Ascending aorta (tissue), 2 donors: ENCODE measurements at regions of chr3 and their contacts with region 1.

Region 1: DNA sequence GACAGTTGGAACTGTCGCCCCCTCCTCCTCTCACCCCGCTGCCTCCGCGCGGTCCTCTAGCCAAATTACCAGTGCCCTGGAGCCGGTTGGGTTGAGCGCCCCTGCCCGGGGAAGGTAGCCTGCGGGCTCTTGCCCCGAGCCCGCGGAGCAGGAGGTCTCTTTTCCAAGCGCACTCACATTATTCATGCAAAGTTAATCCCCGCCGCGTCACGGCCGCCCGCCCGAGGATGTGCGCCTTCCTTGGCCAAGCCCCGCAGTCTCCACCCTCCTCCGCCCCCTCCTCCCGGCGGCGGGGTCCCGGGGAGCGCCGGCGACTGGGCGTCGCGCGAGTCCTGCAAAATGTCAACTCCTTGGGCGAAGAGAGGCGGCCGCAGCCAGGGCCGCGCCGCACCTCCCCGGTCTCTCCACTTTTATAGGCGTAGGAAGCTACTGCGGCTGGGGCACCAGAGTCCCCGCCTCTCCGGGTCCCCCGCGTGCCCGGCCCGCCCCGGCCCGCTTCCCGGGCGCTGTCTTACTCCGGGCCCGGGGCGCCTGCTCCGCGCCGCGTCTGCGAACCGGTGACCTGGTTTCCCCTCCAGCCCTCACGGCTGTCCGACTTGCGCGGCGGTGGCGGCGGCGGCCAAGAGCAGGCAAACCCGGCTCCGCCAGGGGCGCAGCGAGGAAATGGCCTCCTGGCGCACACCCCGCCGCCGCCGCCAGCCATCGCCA is at the start of gene THRB:
- DNase-seq: peak; percentile 33 to 88
- H3K4me3 ChIP-seq: peak within 1 kb of the TSS; percentile 72 to 90
- H3K27ac ChIP-seq: peak within 1 kb of the TSS; percentile 99
- H3K4me1 ChIP-seq: peaks cover 0 to 21% of the 10 kb centered on the region in 2 donors
- H3K27me3 ChIP-seq: no peaks in the 10 kb centered on the region
- CTCF ChIP-seq: peak in 2 of 3 experiments; percentile 17 to 44
- total RNA-seq, gene THRB: 24.7 TPM

Region 2: DNA sequence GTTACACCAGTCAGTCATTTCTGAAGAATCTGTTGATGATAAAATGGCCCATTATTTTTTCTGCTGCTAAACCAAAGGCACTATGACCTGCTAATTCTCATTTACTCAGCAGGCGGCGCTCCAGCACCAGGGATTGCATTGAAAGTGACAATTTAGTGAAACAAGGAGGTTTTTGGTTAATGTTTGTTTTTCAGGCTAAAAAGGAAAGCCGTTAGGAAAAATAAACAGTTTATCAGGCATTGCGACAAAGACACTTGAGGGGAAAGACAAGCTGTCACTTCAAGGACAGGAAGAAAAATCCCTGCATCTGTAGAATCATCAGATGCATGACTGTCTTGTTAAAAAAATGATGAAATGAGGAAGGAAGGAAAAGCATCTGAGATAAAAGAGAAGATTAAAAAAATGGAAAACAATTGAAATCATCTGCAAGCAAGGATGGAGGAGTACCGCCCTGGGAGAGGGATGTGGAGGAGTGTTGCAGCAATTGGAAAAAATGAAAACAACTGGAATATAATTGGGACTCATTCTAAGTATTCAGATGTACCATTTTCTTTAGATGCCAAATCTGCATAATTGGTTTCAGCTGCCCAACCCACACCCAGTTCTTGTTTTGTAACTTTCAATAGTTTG is 495.6 kb before region 1 on chr3:
- intact Hi-C with region 1: loop called (anchors 5 kb)
- DNase-seq: peak in 1 of 2 donors; percentile 92
- H3K4me3 ChIP-seq: no peak overlapping the region
- H3K27ac ChIP-seq: peak overlapping the region in 1 of 2 donors; percentile 42
- H3K4me1 ChIP-seq: peaks cover 0 to 8% of the 10 kb centered on the region in 2 donors
- H3K27me3 ChIP-seq: no peaks in the 10 kb centered on the region
- CTCF ChIP-seq: peak; percentile 91 to 95 (median 94)

Region 3: DNA sequence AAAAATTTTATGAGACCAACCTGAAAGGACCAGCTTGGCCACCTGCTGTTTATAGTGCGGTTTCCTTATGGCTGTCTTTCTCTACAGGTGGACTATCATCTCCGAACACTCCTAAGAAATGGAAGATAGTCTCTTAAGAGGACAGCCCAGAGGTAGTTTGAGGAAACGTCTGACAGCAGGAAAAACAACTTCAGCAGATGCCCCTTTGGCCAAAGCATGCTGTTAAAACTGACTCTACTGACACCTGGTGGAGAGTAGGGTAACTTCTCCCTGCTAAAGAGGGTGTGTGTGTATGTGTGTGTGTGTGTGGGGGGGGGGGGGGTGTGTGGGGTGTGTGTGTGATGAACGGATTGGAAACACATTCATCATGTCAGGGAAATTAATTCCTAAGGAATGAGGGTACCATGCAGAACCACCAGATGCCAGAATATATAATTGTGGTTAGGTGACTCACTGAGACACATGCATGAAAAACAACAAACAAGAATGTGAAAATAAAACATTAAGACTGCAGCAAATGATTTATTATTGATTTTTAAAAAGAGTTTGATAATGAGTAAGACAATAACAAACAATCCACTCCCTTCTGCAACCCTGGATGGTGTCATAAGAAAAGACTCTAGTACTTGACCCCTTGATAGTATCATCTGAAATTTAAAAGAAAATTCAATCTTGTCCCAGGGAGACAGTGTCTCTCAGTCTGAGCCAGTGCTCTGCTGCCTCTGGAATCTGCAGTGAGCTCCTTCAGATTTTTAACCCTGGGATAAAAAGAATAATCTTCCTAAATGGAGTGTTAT is 256.6 kb before region 1 on chr3:
- intact Hi-C with region 1: loop called (anchors 5 kb)
- DNase-seq: no peak
- H3K4me3 ChIP-seq: no peak overlapping the region
- H3K27ac ChIP-seq: peak overlapping the region; percentile 72 to 80
- H3K4me1 ChIP-seq: peaks cover 3 to 34% of the 10 kb centered on the region in 2 donors
- H3K27me3 ChIP-seq: no peaks in the 10 kb centered on the region
- CTCF ChIP-seq: peak; percentile 61 to 77 (median 71)

Region 4: GRCh38 chr3:24359645-24360462 is 134.9 kb before region 1 on chr3:
- intact Hi-C with region 1: loop called (anchors 5 kb)
- DNase-seq: no peak
- H3K4me3 ChIP-seq: no peak overlapping the region
- H3K27ac ChIP-seq: peak overlapping the region; percentile 73 to 78
- H3K4me1 ChIP-seq: peaks cover 10 to 67% of the 10 kb centered on the region in 2 donors
- H3K27me3 ChIP-seq: no peaks in the 10 kb centered on the region
- CTCF ChIP-seq: peak in 2 of 3 experiments; percentile 16 to 44

Region 5: DNA sequence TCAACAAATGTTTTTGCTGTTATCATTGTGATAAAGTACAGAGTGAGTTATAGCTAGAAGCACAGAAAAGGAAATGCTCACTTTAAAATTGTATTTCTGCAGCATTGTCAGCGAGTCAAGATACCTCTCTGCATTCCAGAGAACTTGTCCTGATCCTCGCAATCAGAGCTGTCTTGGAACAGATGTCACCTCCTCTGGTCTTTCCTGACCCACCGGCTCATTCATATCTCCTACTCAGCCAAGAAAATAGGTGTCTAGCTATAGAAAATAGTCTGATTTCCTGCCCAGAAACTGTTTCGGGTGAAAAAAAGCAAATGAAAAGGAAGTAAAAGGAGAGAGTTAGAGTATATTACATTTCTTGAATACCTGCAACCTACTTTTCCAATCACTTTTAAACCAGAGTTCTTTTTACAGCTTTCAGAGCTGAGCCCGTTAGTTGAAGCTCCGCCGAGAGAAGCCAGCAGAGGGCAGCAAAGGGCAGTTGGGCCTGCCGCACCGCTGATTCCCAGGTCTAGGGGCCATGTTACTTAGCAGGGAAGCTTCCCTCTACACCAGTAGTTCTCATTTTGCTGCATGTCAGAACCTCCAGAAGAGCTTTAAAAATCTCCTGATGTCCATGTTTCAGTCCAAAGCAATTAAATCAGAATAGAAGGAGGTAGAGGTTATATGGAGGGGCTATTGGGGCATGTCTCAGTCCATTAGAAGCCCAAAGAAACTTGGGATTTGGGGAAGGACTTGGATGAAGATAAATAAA is 185.6 kb after region 1 on chr3:
- intact Hi-C with region 1: loop called (anchors 2 kb)
- DNase-seq: peak in 1 of 2 donors; percentile 77
- H3K4me3 ChIP-seq: no peak overlapping the region
- H3K27ac ChIP-seq: peak overlapping the region in 1 of 2 donors; percentile 34
- H3K4me1 ChIP-seq: peaks cover 0 to 9% of the 10 kb centered on the region in 2 donors
- H3K27me3 ChIP-seq: no peaks in the 10 kb centered on the region
- CTCF ChIP-seq: peak; percentile 55 to 86 (median 80)